ENCODE measurements at regions of chr2 and their contacts with region 1.

Region 1: GRCh38 chr2:61470965-61471904 is at the start of gene USP34:
- DNase-seq: peak; percentile 95
- ATAC-seq: peak; percentile 92
- H3K4me3 Mint-ChIP-seq: peak within 1 kb of the TSS; percentile 89
- H3K27ac Mint-ChIP-seq: peak within 1 kb of the TSS; percentile 95
- H3K4me1 Mint-ChIP-seq: peaks cover 27% of the 10 kb centered on the region
- H3K27me3 Mint-ChIP-seq: no peaks in the 10 kb centered on the region
- CTCF ChIP-seq: no peak
- total RNA-seq, gene USP34: 69.0 to 71.3 TPM

Region 2: DNA sequence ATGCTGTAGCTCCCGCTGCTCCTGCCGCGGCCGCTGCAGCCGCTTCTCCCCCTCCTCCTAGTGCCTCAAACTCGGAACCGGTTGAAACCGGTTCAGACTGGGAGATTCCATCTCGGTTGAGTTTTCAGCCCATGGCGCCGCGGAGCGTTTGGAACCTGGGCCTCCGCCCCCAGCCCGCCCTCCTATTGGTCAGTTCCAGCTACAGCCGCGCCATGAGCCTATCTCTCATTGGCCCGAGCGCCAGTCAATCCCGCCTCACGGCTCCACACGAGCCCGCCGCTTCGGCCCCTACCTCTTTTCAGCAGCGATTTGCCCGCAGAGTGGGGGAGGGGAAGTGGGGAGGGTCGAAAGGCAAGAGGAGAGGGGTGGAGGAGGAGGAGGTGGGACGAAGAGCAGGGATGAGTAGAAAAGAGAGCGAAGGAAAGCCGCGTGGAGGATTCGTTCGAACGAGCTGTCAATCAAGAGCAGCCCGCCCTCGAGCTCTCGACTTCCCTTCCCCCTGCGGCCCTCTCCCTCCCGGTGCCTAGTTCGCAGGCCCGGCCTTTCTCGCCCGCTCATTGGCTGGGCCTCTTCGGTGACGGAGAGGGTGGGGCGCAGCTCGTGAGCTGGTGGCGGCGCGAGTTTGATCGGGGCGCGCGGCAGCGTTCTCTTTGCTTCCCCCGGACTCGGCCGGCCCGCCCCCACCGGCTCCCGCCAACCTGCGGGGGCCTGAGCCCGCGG is 67.1 kb after region 1 on chr2 and contains the start of gene XPO1:
- CTCF ChIA-PET with region 1: no interaction called
- POLR2A ChIA-PET with region 1: interaction called, 6 read pairs
- intact Hi-C with region 1: loop called (anchors 5 kb)
- DNase-seq: peak; percentile 100
- ATAC-seq: peak; percentile 81
- H3K4me3 Mint-ChIP-seq: peak within 1 kb of the TSS; percentile 83
- H3K27ac Mint-ChIP-seq: peak within 1 kb of the TSS; percentile 100
- H3K4me1 Mint-ChIP-seq: peaks cover 27% of the 10 kb centered on the region
- H3K27me3 Mint-ChIP-seq: no peaks in the 10 kb centered on the region
- CTCF ChIP-seq: no peak
- total RNA-seq, gene XPO1: 208 to 221 TPM